Natural killer cell (primary cell): ENCODE measurements at regions of chrX and their contacts with region 1.

Region 1: GRCh38 chrX:52995135-52996020 is 37.1 kb upstream of the FAM156A start:
- DNase-seq: peak; percentile 86 to 94
- ATAC-seq: peak; percentile 95 to 99 (median 95)
- H3K4me3 ChIP-seq: peak overlapping the region; percentile 83
- H3K4me3 Mint-ChIP-seq: peak overlapping the region; percentile 94
- H3K27ac ChIP-seq: peak overlapping the region; percentile 99
- H3K27ac Mint-ChIP-seq: peak overlapping the region; percentile 94 to 96
- H3K4me1 ChIP-seq: peaks cover 21% of the 10 kb centered on the region
- H3K4me1 Mint-ChIP-seq: peaks cover 13 to 17% of the 10 kb centered on the region in 2 donors
- H3K27me3 ChIP-seq: no peaks in the 10 kb centered on the region
- H3K27me3 Mint-ChIP-seq: no peaks in the 10 kb centered on the region
- CTCF ChIP-seq: peak; percentile 53

Region 2: DNA sequence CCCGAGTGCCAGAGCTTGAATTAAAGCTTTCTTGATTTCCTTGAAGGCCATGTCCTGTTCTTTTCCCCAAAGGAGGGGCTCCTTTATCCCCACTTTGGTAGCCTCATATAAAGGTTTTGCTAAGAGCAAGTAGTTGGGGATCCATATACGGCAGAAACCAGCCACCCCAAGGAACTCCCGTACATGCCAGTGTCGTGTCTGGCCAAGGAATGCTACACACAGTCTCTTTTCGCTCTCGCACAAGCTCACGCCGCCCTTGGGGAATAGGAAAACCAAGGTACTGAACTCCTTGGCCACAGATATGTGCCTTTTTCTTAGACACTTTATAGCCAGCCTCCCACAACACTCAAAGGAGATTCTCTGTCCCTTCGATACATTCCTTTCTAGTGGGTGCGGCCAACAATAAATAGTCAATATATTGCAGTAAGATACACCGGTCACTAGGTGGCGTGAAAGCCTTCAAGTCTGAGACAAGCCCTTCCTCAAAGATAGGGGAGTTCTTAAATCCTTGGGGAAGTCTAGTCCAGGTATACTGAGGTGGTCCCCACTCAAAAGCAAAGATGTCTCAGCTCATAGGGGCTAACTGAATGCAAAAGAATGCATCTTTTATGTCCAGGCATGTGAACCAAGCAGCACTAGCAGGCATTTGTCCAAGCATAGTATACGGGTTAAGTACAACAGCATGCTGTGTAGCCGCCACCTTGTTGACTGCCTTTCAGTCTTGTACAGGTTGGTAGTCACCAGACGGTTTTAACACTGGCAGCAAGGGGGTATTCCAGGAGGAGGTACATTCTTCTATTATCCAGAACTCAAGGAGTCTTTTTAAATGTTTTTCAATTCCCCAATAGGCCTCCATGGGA is 420.7 kb before region 1 on chrX:
- intact Hi-C with region 1: loop called (anchors 1 kb)
- DNase-seq: peak in 1 of 2 donors; percentile 64
- ATAC-seq: peak in 1 of 3 donors; percentile 50
- H3K4me3 ChIP-seq: no peak overlapping the region
- H3K4me3 Mint-ChIP-seq: no peak overlapping the region
- H3K27ac ChIP-seq: no peak overlapping the region
- H3K27ac Mint-ChIP-seq: no peak overlapping the region
- H3K4me1 ChIP-seq: no peaks in the 10 kb centered on the region
- H3K4me1 Mint-ChIP-seq: peaks cover 0 to 5% of the 10 kb centered on the region in 2 donors
- H3K27me3 ChIP-seq: no peaks in the 10 kb centered on the region
- H3K27me3 Mint-ChIP-seq: peaks cover 4 to 41% of the 10 kb centered on the region in 2 donors
- CTCF ChIP-seq: peak; percentile 36